ENCODE measurements at regions of chr20 and their contacts with region 1.

Region 1: GRCh38 chr20:31906001-31906400 is 35.6 kb downstream of the TTLL9 start:
- DNase-seq: no peak
- H3K4me3 Mint-ChIP-seq: no peak overlapping the region
- H3K27ac Mint-ChIP-seq: no peak overlapping the region
- H3K4me1 Mint-ChIP-seq: no peaks in the 10 kb centered on the region
- H3K27me3 Mint-ChIP-seq: peaks cover 16% of the 10 kb centered on the region
- CTCF ChIP-seq: no peak

Region 2: GRCh38 chr20:31806564-31807355 is 99.2 kb before region 1 on chr20:
- CTCF ChIA-PET with region 1: no interaction called
- intact Hi-C with region 1: no loop called
- DNase-seq: no peak
- H3K4me3 Mint-ChIP-seq: no peak overlapping the region
- H3K27ac Mint-ChIP-seq: no peak overlapping the region
- H3K4me1 Mint-ChIP-seq: no peaks in the 10 kb centered on the region
- H3K27me3 Mint-ChIP-seq: no peaks in the 10 kb centered on the region
- CTCF ChIP-seq: no peak

Region 3: GRCh38 chr20:31925631-31926030 is 19.6 kb after region 1 on chr20:
- CTCF ChIA-PET with region 1: interaction called, 6 read pairs
- intact Hi-C with region 1: loop called (anchors 2 kb)
- DNase-seq: no peak
- H3K4me3 Mint-ChIP-seq: no peak overlapping the region
- H3K27ac Mint-ChIP-seq: no peak overlapping the region
- H3K4me1 Mint-ChIP-seq: no peaks in the 10 kb centered on the region
- H3K27me3 Mint-ChIP-seq: peaks cover 80% of the 10 kb centered on the region
- CTCF ChIP-seq: no peak

Measured in Calu3 (cell line).